Activated CD4-positive, alpha-beta memory T cell treated with anti-CD3 and anti-CD28 coated beads for 36 hours (primary cell): ENCODE measurements at regions of chr19 and their contacts with region 1.

Region 1: GRCh38 chr19:35693830-35694599 is 10.3 kb upstream of the ZBTB32 start:
- DNase-seq: peak; percentile 94
- H3K4me3 Mint-ChIP-seq: no peak overlapping the region
- H3K27ac Mint-ChIP-seq: peak overlapping the region; percentile 54
- H3K4me1 Mint-ChIP-seq: peaks cover 14% of the 10 kb centered on the region
- H3K27me3 Mint-ChIP-seq: no peaks in the 10 kb centered on the region

Region 2: DNA sequence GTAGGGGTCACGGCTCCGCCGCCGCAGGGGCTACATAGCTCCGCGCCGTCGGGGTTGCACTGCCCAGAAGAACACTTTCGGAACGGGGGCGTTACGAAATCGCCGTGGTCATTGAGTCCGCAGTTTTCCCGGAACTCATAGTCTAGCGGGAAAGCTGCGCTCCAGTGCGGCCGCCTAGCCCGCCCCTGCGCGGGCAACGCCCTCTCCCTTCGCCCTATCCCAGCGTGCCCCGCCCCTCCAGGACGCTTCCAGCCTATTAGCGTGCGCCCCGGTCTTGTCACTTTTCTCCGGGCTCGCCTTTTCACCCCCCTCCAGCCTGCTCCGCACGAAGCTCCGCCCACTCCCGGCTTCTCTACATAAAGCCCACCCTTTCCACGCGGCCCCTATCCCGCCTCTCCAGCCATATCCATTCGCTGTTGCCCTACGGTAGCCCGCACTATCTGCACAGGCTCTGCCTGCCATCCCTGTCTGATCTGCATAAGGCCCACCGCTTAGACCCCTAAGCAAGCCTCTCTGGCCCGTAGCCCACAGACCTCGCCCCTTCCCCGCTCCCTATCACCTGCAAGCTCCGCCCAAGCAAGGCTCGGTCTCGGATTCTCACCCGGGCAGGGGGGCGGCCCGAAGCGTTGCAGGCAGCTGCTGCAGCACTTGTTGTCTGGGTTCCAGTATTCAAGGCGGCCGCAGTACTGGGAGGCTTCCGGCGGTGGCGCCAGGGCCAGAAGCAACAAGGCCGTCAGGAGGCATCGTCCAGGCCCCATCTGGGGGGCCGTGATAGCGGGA is 46.6 kb after region 1 on chr19:
- CTCF ChIA-PET with region 1: interaction called, 24 read pairs
- POLR2A ChIA-PET with region 1: no interaction called
- intact Hi-C with region 1: loop called (anchors 1 kb)
- DNase-seq: peak; percentile 98
- H3K4me3 Mint-ChIP-seq: peak overlapping the region; percentile 89
- H3K27ac Mint-ChIP-seq: peak overlapping the region; percentile 90
- H3K4me1 Mint-ChIP-seq: peaks cover 31% of the 10 kb centered on the region
- H3K27me3 Mint-ChIP-seq: no peaks in the 10 kb centered on the region

Region 3: DNA sequence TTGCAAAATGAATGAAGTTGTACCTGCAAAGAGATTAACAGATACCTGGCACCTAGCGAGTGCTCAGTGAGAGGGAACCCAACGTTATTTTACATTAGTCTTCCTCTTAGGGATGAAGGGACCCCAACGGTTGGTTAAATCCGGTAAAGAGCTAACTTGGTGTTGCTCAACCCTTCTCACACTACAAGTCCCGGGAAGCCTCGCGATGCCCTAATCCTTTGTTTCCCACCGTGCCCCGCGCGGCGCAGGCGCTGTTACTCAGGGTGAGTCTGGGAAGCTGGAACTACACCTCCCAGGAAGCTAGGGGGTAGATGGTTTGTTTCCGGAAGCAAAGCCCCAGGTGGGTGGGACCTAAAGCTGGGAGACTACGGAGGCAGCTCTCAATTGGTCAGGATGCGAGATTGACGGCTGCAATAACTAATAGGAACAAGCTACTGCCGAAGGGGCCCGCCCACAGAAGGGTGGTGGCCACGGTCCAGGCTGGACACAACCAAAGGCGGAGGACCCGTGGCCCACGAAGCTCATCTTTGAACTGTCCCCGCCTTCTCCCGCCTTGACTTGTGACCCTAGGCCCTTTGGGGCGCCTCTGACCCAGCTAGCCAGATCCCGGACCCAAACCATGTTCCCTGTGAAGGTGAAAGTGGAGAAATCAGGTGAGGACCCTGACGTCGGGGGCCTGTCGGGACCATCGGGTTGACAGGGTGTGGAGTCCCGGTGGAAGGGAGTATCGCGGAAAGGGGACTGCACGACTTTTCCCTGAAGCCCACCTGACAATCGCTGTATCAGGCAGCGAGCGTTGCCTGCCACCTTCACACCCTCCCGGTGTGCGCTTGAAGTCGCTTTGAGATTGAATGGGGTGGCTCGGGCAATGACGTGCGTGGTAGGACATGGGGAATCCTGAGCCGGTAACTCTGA is 54.3 kb after region 1 on chr19 and contains the start of gene LIN37:
- CTCF ChIA-PET with region 1: interaction called, 10 read pairs
- POLR2A ChIA-PET with region 1: no interaction called
- intact Hi-C with region 1: no loop called
- DNase-seq: peak; percentile 99
- H3K4me3 Mint-ChIP-seq: peak within 1 kb of the TSS; percentile 94
- H3K27ac Mint-ChIP-seq: peak within 1 kb of the TSS; percentile 88
- H3K4me1 Mint-ChIP-seq: peaks cover 42% of the 10 kb centered on the region
- H3K27me3 Mint-ChIP-seq: no peaks in the 10 kb centered on the region
- total RNA-seq, gene LIN37: 7.5 TPM

Region 4: DNA sequence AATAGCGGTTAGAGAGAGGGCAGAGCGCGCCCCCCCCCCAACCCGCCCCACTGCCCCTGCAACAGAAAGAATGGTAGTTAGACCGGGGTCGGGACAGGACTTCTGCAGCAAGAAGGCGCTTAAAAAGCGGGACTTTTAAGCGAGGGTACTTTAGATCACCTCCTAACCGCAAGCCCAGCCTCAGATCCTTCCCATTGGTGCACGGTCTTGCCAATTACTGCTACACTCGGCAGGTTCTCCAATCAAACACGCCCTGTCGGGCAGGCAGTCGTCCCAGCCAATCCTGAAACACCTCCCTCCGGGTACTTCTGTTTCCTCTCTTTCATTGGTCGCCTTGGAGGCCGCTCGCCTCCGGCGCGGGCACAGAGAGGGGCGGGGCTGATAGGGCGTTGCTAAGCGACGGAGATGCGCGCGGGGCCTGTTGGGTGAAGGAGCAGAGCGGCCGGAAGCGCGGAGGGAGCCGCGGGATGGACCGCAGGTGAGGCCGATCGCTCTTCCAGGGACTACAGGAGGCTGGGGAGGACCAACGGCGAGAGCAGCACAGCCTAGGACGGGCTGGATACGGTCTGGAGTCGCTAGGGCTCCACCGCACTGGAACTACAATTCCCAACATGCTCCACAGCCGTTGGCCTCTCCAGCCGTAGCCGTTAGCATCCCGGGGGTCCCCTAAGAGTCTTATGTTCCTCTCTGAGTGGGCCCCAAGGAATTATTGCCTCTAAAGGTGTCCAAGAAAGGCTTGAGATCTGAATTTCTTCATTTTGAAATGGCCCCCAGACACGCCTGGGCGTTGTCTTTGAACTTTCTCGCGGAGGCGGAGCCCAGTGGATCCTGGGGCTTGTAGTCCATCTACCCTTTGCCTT is 64.0 kb after region 1 on chr19 and contains the start of gene PROSER3:
- CTCF ChIA-PET with region 1: interaction called, 3 read pairs
- POLR2A ChIA-PET with region 1: no interaction called
- intact Hi-C with region 1: loop called (anchors 1 kb)
- DNase-seq: peak; percentile 99
- H3K4me3 Mint-ChIP-seq: peak within 1 kb of the TSS; percentile 88
- H3K27ac Mint-ChIP-seq: peak within 1 kb of the TSS; percentile 91
- H3K4me1 Mint-ChIP-seq: peaks cover 27% of the 10 kb centered on the region
- H3K27me3 Mint-ChIP-seq: no peaks in the 10 kb centered on the region
- total RNA-seq, gene PROSER3: 38.4 to 40.0 TPM

Region 5: GRCh38 chr19:35822579-35822978 is 128.6 kb after region 1 on chr19:
- CTCF ChIA-PET with region 1: interaction called, 26 read pairs
- POLR2A ChIA-PET with region 1: no interaction called
- intact Hi-C with region 1: loop called (anchors 1 kb)
- DNase-seq: no peak
- H3K4me3 Mint-ChIP-seq: no peak overlapping the region
- H3K27ac Mint-ChIP-seq: no peak overlapping the region
- H3K4me1 Mint-ChIP-seq: no peaks in the 10 kb centered on the region
- H3K27me3 Mint-ChIP-seq: peaks cover 19% of the 10 kb centered on the region

Region 6: GRCh38 chr19:35869327-35870123 is 175.5 kb after region 1 on chr19:
- CTCF ChIA-PET with region 1: interaction called, 5 read pairs
- POLR2A ChIA-PET with region 1: no interaction called
- intact Hi-C with region 1: loop called (anchors 5 kb)
- DNase-seq: peak; percentile 91
- H3K4me3 Mint-ChIP-seq: peak overlapping the region; percentile 64
- H3K27ac Mint-ChIP-seq: no peak overlapping the region
- H3K4me1 Mint-ChIP-seq: peaks cover 14% of the 10 kb centered on the region
- H3K27me3 Mint-ChIP-seq: peaks cover 38% of the 10 kb centered on the region

Region 7: DNA sequence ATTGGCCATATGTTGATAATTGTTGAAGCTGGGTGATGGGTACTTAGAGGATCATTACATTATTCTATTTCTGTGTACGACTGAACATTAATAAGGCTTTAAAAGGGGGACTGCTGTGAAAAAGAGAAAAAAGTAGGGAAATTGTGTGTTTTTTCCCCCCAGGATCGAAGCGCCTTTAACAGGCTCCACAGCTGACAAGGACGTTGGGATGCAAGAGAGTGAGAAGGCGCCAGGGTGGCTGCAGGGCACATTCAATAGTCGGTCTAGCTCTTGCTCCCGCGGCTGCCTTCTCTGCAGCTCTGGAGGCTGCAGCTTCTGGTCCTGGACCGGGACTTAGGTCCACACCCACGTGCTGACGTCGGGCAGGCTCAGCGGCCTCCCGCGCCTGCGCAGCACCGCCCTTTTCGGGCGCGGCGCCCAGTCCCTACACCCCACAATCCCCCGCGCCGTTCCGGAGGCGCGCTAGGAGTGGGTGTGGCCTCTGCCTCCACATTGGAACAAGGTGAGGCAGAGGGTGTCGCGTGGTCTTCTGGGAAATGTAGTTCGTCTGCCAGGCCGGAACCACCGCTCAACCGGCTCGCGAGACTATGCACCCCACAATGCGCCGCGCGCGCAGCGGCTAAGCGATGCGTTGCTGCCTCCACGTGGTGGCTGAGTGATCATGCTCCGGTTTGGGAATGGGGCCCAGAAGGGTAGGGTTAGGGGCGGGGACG is 237.3 kb after region 1 on chr19:
- CTCF ChIA-PET with region 1: interaction called, 8 read pairs
- POLR2A ChIA-PET with region 1: interaction called, 4 read pairs
- intact Hi-C with region 1: loop called (anchors 1 kb)
- DNase-seq: peak; percentile 100
- H3K4me3 Mint-ChIP-seq: peak overlapping the region; percentile 62
- H3K27ac Mint-ChIP-seq: peak overlapping the region; percentile 79
- H3K4me1 Mint-ChIP-seq: peaks cover 30% of the 10 kb centered on the region
- H3K27me3 Mint-ChIP-seq: no peaks in the 10 kb centered on the region